Activated B cell treated with CpG ODN at 0.5 μM for 24 hours (primary cell): ENCODE measurements at regions of chr18 and their contacts with region 1.

Region 1: GRCh38 chr18:46173393-46174341 is 69.5 kb downstream of the HAUS1 start:
- DNase-seq: peak; percentile 91
- ATAC-seq: peak; percentile 88
- H3K4me3 Mint-ChIP-seq: peak overlapping the region; percentile 97
- H3K27ac Mint-ChIP-seq: peak overlapping the region; percentile 99
- H3K4me1 Mint-ChIP-seq: peaks cover 44% of the 10 kb centered on the region
- H3K27me3 Mint-ChIP-seq: no peaks in the 10 kb centered on the region
- CTCF ChIP-seq: peak; percentile 52

Region 2: GRCh38 chr18:45974088-45974536 is 199.6 kb before region 1 on chr18:
- CTCF ChIA-PET with region 1: no interaction called
- POLR2A ChIA-PET with region 1: no interaction called
- intact Hi-C with region 1: no loop called
- DNase-seq: no peak
- ATAC-seq: peak; percentile 54
- H3K4me3 Mint-ChIP-seq: no peak overlapping the region
- H3K27ac Mint-ChIP-seq: no peak overlapping the region
- H3K4me1 Mint-ChIP-seq: peaks cover 4% of the 10 kb centered on the region
- H3K27me3 Mint-ChIP-seq: no peaks in the 10 kb centered on the region
- CTCF ChIP-seq: no peak

Region 3: GRCh38 chr18:46097801-46098615 is 75.7 kb before region 1 on chr18 and contains the start of gene ATP5F1A:
- CTCF ChIA-PET with region 1: interaction called, 8 read pairs
- POLR2A ChIA-PET with region 1: interaction called, 11 read pairs
- intact Hi-C with region 1: loop called (anchors 1 kb)
- DNase-seq: peak; percentile 78
- ATAC-seq: peak; percentile 86
- H3K4me3 Mint-ChIP-seq: peak within 1 kb of the TSS; percentile 97
- H3K27ac Mint-ChIP-seq: peak within 1 kb of the TSS; percentile 97
- H3K4me1 Mint-ChIP-seq: peaks cover 35% of the 10 kb centered on the region
- H3K27me3 Mint-ChIP-seq: no peaks in the 10 kb centered on the region
- CTCF ChIP-seq: no peak
- total RNA-seq, gene ATP5F1A: 336 and 348 TPM in 2 replicates

Region 4: DNA sequence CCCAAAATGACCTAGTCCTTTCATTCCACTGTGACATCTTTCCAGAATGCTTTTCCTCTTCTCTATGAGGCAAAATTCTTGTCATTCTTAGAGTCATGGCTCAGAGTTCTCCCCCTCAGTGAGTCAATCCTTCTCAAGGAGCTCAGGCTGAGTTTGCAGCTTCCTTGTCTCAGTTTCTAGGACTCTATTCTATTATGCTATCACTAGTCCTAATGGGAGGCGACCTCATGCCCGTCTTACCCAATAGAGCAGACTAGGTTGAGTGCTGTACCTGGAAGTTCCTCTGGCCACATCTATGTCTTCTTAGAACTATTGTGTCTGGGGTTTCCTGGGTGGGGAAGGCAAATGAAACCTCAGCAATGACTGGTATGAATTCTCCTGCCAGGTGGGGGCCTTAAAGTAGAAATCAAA is 18.0 kb before region 1 on chr18:
- CTCF ChIA-PET with region 1: interaction called, 11 read pairs
- POLR2A ChIA-PET with region 1: interaction called, 6 read pairs
- intact Hi-C with region 1: no loop called
- DNase-seq: no peak
- ATAC-seq: no peak
- H3K4me3 Mint-ChIP-seq: no peak overlapping the region
- H3K27ac Mint-ChIP-seq: no peak overlapping the region
- H3K4me1 Mint-ChIP-seq: peaks cover 14% of the 10 kb centered on the region
- H3K27me3 Mint-ChIP-seq: no peaks in the 10 kb centered on the region
- CTCF ChIP-seq: no peak

Region 5: GRCh38 chr18:46207985-46208384 is 34.3 kb after region 1 on chr18:
- CTCF ChIA-PET with region 1: interaction called, 22 read pairs
- POLR2A ChIA-PET with region 1: interaction called, 5 read pairs
- intact Hi-C with region 1: loop called (anchors 1 kb)
- DNase-seq: no peak
- ATAC-seq: no peak
- H3K4me3 Mint-ChIP-seq: no peak overlapping the region
- H3K27ac Mint-ChIP-seq: no peak overlapping the region
- H3K4me1 Mint-ChIP-seq: peaks cover 82% of the 10 kb centered on the region
- H3K27me3 Mint-ChIP-seq: no peaks in the 10 kb centered on the region
- CTCF ChIP-seq: no peak

Region 6: DNA sequence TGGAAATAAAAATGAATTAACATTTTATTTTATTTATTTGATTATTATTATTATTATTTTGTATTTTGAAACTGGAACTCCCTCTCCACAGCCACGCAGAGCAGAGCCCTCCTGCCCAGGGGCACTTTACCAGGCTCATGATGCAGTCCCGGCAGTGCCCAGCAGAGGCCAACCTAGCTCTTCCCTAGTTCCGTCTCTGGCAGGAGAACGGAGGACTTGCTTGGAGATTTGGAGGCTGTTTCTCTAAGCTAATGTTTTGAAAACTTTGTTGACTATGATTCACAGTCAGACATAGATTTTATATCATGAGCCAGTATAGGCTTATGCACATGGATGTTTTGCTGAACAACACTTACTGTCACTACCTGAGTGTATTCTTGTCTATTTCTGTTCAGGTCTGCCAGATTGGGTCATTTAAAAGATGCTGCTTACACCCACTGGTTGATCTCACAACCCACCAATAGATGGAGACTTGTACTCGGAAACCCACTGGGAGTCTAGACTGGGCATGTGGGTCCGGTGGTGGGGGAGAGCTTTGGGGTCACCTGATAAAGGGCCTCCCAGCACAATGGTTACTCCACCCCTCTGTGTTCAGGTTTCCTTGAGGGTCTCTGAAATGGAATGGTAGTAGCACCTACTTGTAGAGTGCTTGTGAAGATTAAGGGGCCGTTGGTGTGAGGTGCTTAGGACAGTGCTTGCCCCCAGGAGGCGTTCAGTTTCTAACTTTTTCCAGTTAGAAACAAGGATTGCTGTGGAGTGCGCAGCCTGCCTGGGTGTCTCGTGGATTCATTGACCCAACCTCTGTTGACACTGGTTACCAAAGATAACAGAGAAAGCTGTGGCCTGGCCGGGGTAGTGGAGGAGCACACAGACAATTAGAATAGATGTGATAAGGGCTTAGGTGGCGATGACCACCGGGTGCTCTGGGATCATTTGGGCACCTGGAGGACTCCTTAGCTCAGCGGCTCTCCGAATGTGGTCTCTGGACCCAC is 107.8 kb after region 1 on chr18:
- CTCF ChIA-PET with region 1: interaction called, 10 read pairs
- POLR2A ChIA-PET with region 1: no interaction called
- intact Hi-C with region 1: no loop called
- DNase-seq: peak; percentile 34
- ATAC-seq: peak; percentile 93
- H3K4me3 Mint-ChIP-seq: no peak overlapping the region
- H3K27ac Mint-ChIP-seq: no peak overlapping the region
- H3K4me1 Mint-ChIP-seq: peaks cover 4% of the 10 kb centered on the region
- H3K27me3 Mint-ChIP-seq: no peaks in the 10 kb centered on the region
- CTCF ChIP-seq: no peak

Region 7: GRCh38 chr18:46660955-46661749 is 487.5 kb after region 1 on chr18:
- CTCF ChIA-PET with region 1: interaction called, 19 read pairs
- POLR2A ChIA-PET with region 1: interaction called, 5 read pairs
- intact Hi-C with region 1: loop called (anchors 1 kb)
- DNase-seq: no peak
- ATAC-seq: no peak
- H3K4me3 Mint-ChIP-seq: no peak overlapping the region
- H3K27ac Mint-ChIP-seq: no peak overlapping the region
- H3K4me1 Mint-ChIP-seq: no peaks in the 10 kb centered on the region
- H3K27me3 Mint-ChIP-seq: peaks cover 3% of the 10 kb centered on the region
- CTCF ChIP-seq: no peak